ENCODE measurements at regions of chrX and their contacts with region 1.

Region 1: GRCh38 chrX:125295337-125295736 is 24.3 kb upstream of the TEX13C start:
- DNase-seq: no peak
- H3K4me3 Mint-ChIP-seq: peak overlapping the region; percentile 34
- H3K27ac Mint-ChIP-seq: peak overlapping the region; percentile 80
- H3K4me1 Mint-ChIP-seq: peaks cover 15% of the 10 kb centered on the region
- H3K27me3 Mint-ChIP-seq: no peaks in the 10 kb centered on the region

Region 2: GRCh38 chrX:124211312-124211942 is 1083.9 kb before region 1 on chrX:
- intact Hi-C with region 1: loop called (anchors 10 kb)
- DNase-seq: peak; percentile 79
- H3K4me3 Mint-ChIP-seq: no peak overlapping the region
- H3K27ac Mint-ChIP-seq: no peak overlapping the region
- H3K4me1 Mint-ChIP-seq: peaks cover 33% of the 10 kb centered on the region
- H3K27me3 Mint-ChIP-seq: no peaks in the 10 kb centered on the region

Region 3: GRCh38 chrX:125205133-125205917 is 90.0 kb before region 1 on chrX:
- intact Hi-C with region 1: loop called (anchors 10 kb)
- DNase-seq: peak; percentile 66
- H3K4me3 Mint-ChIP-seq: peak overlapping the region; percentile 82
- H3K27ac Mint-ChIP-seq: no peak overlapping the region
- H3K4me1 Mint-ChIP-seq: peaks cover 18% of the 10 kb centered on the region
- H3K27me3 Mint-ChIP-seq: peaks cover 44% of the 10 kb centered on the region

Region 4: GRCh38 chrX:125319646-125320521 is 24.5 kb after region 1 on chrX and contains the start of gene TEX13C:
- intact Hi-C with region 1: no loop called
- DNase-seq: no peak
- H3K4me3 Mint-ChIP-seq: no peak within 1 kb of the TSS
- H3K27ac Mint-ChIP-seq: no peak within 1 kb of the TSS
- H3K4me1 Mint-ChIP-seq: no peaks in the 10 kb centered on the region
- H3K27me3 Mint-ChIP-seq: no peaks in the 10 kb centered on the region
- total RNA-seq, gene TEX13C: not detected in 2 replicates